ENCODE measurements at regions of chr15 and their contacts with region 1.

Region 1: DNA sequence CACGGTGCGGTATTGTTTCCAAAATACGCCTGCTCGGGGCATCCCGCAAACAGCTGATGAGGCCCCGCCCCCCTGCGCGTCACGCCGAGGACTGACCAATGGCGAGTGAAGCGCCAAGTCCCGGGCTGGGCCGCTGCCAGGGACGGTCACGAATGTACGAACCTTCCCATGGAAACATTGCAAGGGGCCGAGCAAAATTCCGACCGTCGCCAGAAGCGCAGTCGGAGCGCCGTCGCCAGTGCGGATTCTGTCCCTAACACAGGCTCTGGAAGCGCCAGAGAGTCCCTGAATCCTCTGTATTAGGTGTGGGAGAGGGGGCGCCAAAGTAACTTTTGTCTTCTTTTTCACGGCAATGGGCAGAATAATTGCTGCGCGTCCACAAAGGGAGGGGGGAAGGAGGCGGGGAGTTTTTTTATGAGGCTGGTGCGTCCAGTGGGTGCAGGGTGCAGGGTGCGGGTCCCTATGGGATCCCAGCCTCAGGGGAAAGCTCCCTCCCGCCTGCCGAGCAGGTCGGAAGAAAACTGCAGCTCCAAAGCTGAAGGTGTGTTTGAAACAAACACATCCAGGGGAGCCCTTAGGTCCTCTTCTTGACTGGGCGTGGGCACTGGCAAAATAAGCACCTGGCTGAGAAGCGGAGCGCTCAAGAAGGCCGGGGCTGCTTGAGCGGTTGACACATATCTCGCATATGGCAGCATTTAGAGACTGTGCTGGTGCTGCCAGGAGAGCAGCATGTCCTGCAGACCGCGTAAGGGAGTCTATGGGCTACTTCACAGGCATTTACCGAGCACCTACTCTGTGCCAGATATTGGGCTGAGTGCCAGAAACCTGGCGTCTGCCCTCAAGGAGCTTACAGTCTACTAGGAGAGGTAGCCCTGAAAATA is at the start of gene BMF:
- DNase-seq: peak; percentile 100
- ATAC-seq: peak; percentile 86 to 95 (median 92)
- H3K4me3 ChIP-seq: peak within 1 kb of the TSS; percentile 36 to 87 (median 78)
- H3K27ac ChIP-seq: peak within 1 kb of the TSS; percentile 44 to 91 (median 77)
- H3K4me1 ChIP-seq: peaks cover 9 to 47% (median 34%) of the 10 kb centered on the region in 9 donors
- H3K27me3 ChIP-seq: peaks cover 0 to 8% (median 0%) of the 10 kb centered on the region in 7 donors
- CTCF ChIP-seq: peak in 7 of 9 donors; percentile 15 to 53 (median 37)
- total RNA-seq, gene BMF: 0.92 to 10.2 (median 3.0) TPM

Region 2: GRCh38 chr15:40044717-40045571 is 64.2 kb before region 1 on chr15:
- intact Hi-C with region 1: loop called in 9 of 10 experiments (anchors 2 to 10 kb)
- DNase-seq: peak; percentile 87 to 89
- ATAC-seq: peak; percentile 91 to 96 (median 94)
- H3K4me3 ChIP-seq: peak overlapping the region in 5 of 10 donors; percentile 2 to 22 (median 19)
- H3K27ac ChIP-seq: peak overlapping the region in 8 of 10 donors; percentile 36 to 74 (median 46)
- H3K4me1 ChIP-seq: peaks cover 3 to 67% (median 59%) of the 10 kb centered on the region in 9 donors
- H3K27me3 ChIP-seq: no peaks in the 10 kb centered on the region
- CTCF ChIP-seq: peak; percentile 79 to 99 (median 95)

Region 3: GRCh38 chr15:40054605-40055545 is 54.2 kb before region 1 on chr15:
- intact Hi-C with region 1: loop called in 4 of 10 experiments (anchors 5 to 10 kb)
- DNase-seq: no peak
- ATAC-seq: peak in 4 of 8 donors; percentile 7 to 22 (median 10)
- H3K4me3 ChIP-seq: no peak overlapping the region
- H3K27ac ChIP-seq: peak overlapping the region in 3 of 10 donors; percentile 17 to 39 (median 31)
- H3K4me1 ChIP-seq: peaks cover 7 to 67% (median 14%) of the 10 kb centered on the region in 9 donors
- H3K27me3 ChIP-seq: no peaks in the 10 kb centered on the region
- CTCF ChIP-seq: no peak

Region 4: GRCh38 chr15:40064221-40064894 is 44.7 kb before region 1 on chr15:
- intact Hi-C with region 1: loop called in 5 of 10 experiments (anchors 1 to 10 kb)
- DNase-seq: no peak
- ATAC-seq: no peak
- H3K4me3 ChIP-seq: no peak overlapping the region
- H3K27ac ChIP-seq: no peak overlapping the region
- H3K4me1 ChIP-seq: peaks cover 7 to 27% (median 15%) of the 10 kb centered on the region in 9 donors
- H3K27me3 ChIP-seq: no peaks in the 10 kb centered on the region
- CTCF ChIP-seq: no peak

Region 5: GRCh38 chr15:40069178-40070165 is 39.6 kb before region 1 on chr15:
- intact Hi-C with region 1: loop called in 4 of 10 experiments (anchors 1 to 5 kb)
- DNase-seq: peak; percentile 91 to 92
- ATAC-seq: peak; percentile 87 to 97 (median 94)
- H3K4me3 ChIP-seq: no peak overlapping the region
- H3K27ac ChIP-seq: peak overlapping the region in 9 of 10 donors; percentile 21 to 86 (median 71)
- H3K4me1 ChIP-seq: peaks cover 11 to 39% (median 26%) of the 10 kb centered on the region in 9 donors
- H3K27me3 ChIP-seq: no peaks in the 10 kb centered on the region
- CTCF ChIP-seq: no peak

Region 6: DNA sequence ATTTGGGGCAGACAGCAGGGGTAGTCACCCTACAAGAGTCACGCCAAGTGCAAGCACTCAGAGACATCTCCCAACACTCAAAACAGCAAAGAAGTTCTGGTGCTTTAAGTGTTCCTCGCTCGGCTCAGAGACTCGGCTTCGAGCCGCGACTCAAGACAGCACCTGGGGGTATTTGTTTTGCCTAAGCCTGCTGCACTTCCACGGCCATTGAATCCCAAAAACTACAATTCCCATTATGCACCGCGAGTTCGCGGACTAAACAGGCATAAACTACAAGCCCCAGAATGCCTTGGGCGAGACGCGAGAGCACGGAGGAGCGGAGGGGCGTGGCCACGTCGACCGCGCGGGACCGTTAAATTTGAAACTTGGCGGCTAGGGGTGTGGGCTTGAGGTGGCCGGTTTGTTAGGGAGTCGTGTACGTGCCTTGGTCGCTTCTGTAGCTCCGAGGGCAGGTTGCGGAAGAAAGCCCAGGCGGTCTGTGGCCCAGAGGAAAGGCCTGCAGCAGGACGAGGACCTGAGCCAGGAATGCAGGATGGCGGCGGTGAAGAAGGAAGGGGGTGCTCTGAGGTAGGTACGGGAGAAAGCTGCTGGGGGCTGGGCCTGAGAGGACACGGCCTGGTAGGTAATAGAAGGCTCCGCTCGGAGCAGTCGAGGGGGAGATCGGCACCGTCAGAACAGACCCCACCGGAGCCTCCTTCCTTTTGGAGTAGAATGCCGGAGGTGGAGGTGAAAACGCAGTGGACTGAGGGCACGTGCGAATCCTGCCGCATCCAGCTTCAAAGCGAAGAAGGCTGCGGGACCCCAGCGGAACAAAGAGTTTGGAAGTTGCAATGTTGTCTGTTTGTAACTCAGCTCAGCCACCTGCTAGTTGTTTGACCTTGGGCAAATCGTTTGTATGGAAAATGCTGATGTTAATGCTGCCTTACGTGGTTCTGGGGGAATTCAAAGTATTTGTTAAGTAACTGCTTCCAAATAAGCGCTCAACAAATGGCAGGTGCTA is 51.9 kb after region 1 on chr15 and contains the start of gene BUB1B:
- intact Hi-C with region 1: loop called in 4 of 10 experiments (anchors 5 kb)
- DNase-seq: peak; percentile 89 to 96
- ATAC-seq: peak; percentile 94 to 99 (median 98)
- H3K4me3 ChIP-seq: peak within 1 kb of the TSS; percentile 32 to 66 (median 58)
- H3K27ac ChIP-seq: peak within 1 kb of the TSS in 1 of 10 donors; percentile 24
- H3K4me1 ChIP-seq: peaks cover 0 to 30% (median 10%) of the 10 kb centered on the region in 9 donors
- H3K27me3 ChIP-seq: no peaks in the 10 kb centered on the region
- CTCF ChIP-seq: peak in 1 of 9 donors; percentile 5
- total RNA-seq, gene BUB1B: 0.42 to 5.1 (median 1.3) TPM

Measured in heart right ventricle (tissue), 16 donors.